ENCODE measurements at regions of chr11 and their contacts with region 1.

Region 1: DNA sequence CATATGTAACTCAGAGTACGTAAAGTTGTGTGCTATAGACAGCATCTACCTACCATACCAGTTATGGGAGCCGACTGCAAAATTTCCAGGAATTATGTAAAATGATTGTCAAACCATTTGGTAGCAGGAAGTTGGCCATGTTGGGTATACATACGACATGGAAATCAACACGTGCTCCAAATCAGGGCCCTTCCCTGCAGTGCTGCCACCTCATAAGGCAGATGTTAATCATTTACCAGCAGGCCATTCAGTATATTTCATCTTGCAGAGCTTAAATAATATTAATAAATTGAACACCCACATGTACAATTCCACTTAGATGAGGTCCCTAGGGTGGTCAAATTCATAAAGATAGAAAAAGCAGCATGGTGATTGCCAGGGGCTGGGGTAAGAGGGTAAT is 9.8 kb downstream of the MS4A18 start:
- DNase-seq: no peak
- ATAC-seq: no peak
- H3K4me3 ChIP-seq: no peak overlapping the region
- H3K27ac ChIP-seq: no peak overlapping the region
- H3K4me1 ChIP-seq: no peaks in the 10 kb centered on the region
- CTCF ChIP-seq: no peak
- EP300 ChIP-seq: no peak
- POLR2A ChIP-seq: no peak
- RAD21 ChIP-seq: no peak

Region 2: DNA sequence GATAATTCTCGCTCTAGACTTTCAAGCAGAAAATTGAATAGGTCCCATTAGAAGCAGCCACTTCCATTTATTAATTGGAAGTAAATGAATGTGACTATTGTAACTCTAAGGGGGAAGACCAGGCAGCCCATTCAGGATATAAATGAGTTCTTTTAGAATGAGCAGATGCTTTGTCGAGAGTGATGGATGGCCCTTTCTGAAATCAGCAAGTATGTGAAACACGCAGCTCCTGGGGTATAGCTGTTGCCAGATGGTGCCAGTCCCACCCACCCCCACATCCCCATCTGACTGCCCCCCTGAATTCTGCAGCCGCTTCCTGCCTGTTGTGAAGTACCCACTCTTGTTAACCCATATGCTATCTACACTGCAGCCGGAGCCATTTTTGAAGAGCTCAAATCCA is 214.0 kb after region 1 on chr11:
- CTCF ChIA-PET with region 1: no interaction called
- POLR2A ChIA-PET with region 1: interaction called, 11 read pairs
- DNase-seq: no peak
- ATAC-seq: no peak
- H3K4me3 ChIP-seq: no peak overlapping the region
- H3K27ac ChIP-seq: no peak overlapping the region
- H3K4me1 ChIP-seq: no peaks in the 10 kb centered on the region
- CTCF ChIP-seq: no peak
- EP300 ChIP-seq: no peak
- POLR2A ChIP-seq: no peak
- RAD21 ChIP-seq: no peak

Measured in A549 (cell line).